Activated CD8-positive, alpha-beta T cell treated with anti-CD3 and anti-CD28 coated beads for 36 hours (primary cell): ENCODE measurements at regions of chr16 and their contacts with region 1.

Region 1: DNA sequence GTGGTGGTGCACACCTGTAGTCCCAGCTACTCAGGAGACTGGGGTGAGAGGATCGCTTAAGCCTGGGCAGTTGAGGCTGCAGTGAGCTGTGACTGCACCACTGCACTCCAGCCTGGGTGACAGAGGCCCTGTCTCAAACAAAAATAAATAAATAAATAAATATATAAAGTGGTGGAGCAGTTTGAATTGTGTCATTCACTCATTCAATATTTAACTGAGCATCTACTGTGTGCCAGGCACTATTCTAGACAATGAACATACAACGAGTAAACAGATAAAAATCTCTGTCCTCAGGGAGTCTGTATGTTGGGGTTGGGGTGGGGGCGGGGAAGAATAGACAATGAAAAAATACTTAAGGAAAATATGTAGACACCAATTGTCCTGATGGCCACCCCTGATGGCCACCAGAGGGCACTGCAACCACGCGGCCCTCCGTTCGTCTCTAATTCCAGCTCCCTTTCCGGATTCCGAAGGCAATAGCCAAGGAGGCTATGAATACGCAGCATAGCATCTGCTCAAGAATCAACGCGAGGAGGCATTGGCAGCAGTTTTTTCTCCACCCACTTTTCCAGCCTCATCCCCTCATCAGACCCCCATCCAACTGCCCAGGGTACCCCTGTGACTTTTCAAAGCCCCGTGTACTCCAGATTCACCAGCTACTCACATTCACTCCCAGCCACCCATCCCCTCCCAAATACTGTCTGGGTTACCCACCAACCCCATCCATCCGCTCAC is 21.4 kb downstream of the QPRT start:
- DNase-seq: peak; percentile 85
- ATAC-seq: peak; percentile 31
- H3K4me3 Mint-ChIP-seq: no peak overlapping the region
- H3K27ac Mint-ChIP-seq: peak overlapping the region; percentile 23
- H3K4me1 Mint-ChIP-seq: peaks cover 29% of the 10 kb centered on the region
- H3K27me3 Mint-ChIP-seq: no peaks in the 10 kb centered on the region
- CTCF ChIP-seq: peak; percentile 93

Region 2: GRCh38 chr16:29686740-29687332 is 13.6 kb before region 1 on chr16:
- CTCF ChIA-PET with region 1: interaction called, 49 read pairs
- POLR2A ChIA-PET with region 1: interaction called, 4 read pairs
- intact Hi-C with region 1: no loop called
- DNase-seq: no peak
- ATAC-seq: no peak
- H3K4me3 Mint-ChIP-seq: no peak overlapping the region
- H3K27ac Mint-ChIP-seq: peak overlapping the region; percentile 42
- H3K4me1 Mint-ChIP-seq: peaks cover 16% of the 10 kb centered on the region
- H3K27me3 Mint-ChIP-seq: no peaks in the 10 kb centered on the region
- CTCF ChIP-seq: no peak

Region 3: DNA sequence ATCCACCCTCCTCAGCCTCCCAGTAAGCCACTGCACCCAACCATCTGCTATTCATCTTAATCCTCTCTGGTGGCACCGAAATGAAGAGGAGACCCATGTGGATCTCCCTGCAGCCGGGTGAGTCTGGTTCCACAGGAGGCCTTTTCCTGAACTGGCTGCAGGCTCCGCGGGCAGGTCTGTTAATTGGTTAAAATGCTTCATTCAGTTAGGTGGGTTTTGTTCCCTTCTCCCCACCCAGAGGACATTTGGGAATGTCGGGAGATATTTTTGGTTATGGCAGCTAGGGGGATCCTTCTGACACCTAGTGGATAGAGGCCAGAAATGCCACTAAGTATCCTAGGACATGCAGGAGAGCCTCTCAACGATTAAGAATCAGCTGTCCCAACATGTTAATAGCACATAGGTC is 28.7 kb after region 1 on chr16:
- CTCF ChIA-PET with region 1: interaction called, 16 read pairs
- POLR2A ChIA-PET with region 1: interaction called, 3 read pairs
- intact Hi-C with region 1: no loop called
- DNase-seq: no peak
- ATAC-seq: no peak
- H3K4me3 Mint-ChIP-seq: no peak overlapping the region
- H3K27ac Mint-ChIP-seq: no peak overlapping the region
- H3K4me1 Mint-ChIP-seq: peaks cover 33% of the 10 kb centered on the region
- H3K27me3 Mint-ChIP-seq: no peaks in the 10 kb centered on the region
- CTCF ChIP-seq: peak; percentile 32

Region 4: DNA sequence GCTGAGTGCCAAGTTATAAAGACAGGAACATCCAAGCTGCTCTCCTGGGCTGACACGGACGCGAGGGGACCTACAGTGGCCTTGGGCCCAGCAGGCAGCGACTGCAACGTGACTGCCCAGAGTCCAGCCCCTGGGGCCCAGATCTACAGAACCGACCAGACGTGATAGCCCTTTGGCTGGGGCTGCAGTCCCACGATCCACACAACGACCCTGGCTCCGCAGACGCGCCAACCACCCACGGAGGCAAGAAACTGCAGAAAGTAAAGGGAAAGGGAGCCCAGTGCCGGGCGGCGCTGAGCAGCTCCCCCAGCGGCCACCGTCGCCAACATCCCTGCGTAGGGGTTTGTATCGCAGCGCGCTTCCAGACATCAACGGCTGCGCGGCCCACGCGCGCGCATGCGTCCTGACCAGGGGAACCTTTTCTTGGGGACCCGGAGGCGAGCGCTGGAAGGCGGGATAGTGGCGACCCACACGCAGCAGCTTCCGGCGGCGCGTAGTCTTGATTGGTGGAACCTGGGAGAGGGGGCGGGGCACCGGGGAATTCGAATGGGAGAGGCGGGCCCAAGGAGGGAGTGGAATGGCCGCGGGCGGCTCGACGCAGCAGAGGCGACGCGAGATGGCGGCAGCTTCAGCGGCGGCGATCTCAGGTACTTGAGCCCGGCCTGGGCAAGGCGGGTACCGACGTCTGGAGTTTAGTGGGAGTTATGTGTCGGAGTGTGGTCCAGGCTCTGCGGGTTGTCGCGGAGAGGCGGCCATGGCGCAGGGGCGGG is 89.9 kb after region 1 on chr16 and contains the start of gene KIF22:
- CTCF ChIA-PET with region 1: interaction called, 43 read pairs
- POLR2A ChIA-PET with region 1: interaction called, 16 read pairs
- intact Hi-C with region 1: loop called (anchors 10 kb)
- DNase-seq: peak; percentile 100
- ATAC-seq: peak; percentile 97
- H3K4me3 Mint-ChIP-seq: peak within 1 kb of the TSS; percentile 100
- H3K27ac Mint-ChIP-seq: peak within 1 kb of the TSS; percentile 97
- H3K4me1 Mint-ChIP-seq: peaks cover 41% of the 10 kb centered on the region
- H3K27me3 Mint-ChIP-seq: no peaks in the 10 kb centered on the region
- CTCF ChIP-seq: peak; percentile 69
- total RNA-seq, gene KIF22: 160 to 165 TPM

Region 5: DNA sequence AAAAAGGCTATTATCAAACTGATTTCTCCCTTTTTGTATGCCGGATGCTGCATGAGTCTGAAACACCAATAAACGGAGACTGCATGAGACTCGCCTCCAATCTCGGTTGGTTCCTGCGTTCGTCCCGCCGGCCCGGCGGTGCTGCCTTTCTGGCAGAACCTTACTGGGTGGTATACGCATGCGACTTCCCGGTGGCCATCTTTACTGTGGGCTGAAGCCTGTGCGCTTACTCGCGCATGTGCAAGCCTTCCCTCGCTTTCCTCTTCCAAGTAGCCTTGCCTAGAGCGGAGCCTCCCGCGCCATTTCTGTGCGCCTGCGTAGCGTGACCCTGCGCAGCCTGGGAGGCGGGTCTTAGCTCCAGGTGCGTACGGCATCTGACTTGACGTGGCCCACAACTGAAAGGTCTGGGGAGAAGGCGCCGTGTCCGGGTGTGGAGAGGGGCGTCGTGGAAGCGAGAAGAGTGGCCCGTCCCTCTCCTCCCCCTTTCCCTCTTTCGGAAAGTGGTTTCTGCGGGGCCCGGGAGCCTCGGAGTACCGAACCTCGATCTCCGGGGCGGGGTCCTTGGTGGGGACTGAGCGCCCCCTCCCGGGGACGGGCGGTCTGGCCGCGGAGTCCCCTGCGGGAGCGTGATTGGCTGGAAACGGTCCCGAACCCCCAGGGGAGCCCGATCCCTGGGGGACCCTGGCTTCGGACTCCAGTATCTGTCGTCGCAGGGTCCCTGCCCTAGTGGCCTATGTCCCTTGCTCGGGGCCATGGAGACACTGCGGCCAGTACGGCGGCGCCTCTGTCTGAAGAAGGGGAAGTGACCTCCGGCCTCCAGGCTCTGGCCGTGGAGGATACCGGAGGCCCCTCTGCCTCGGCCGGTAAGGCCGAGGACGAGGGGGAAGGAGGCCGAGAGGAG is 115.6 kb after region 1 on chr16 and contains the start of gene PAGR1:
- CTCF ChIA-PET with region 1: interaction called, 32 read pairs
- POLR2A ChIA-PET with region 1: interaction called, 5 read pairs
- intact Hi-C with region 1: loop called (anchors 10 kb)
- DNase-seq: peak; percentile 99
- ATAC-seq: peak; percentile 74
- H3K4me3 Mint-ChIP-seq: peak within 1 kb of the TSS; percentile 98
- H3K27ac Mint-ChIP-seq: peak within 1 kb of the TSS; percentile 95
- H3K4me1 Mint-ChIP-seq: peaks cover 69% of the 10 kb centered on the region
- H3K27me3 Mint-ChIP-seq: no peaks in the 10 kb centered on the region
- CTCF ChIP-seq: peak; percentile 94
- total RNA-seq, gene PAGR1: 26.8 to 29.0 TPM

Region 6: DNA sequence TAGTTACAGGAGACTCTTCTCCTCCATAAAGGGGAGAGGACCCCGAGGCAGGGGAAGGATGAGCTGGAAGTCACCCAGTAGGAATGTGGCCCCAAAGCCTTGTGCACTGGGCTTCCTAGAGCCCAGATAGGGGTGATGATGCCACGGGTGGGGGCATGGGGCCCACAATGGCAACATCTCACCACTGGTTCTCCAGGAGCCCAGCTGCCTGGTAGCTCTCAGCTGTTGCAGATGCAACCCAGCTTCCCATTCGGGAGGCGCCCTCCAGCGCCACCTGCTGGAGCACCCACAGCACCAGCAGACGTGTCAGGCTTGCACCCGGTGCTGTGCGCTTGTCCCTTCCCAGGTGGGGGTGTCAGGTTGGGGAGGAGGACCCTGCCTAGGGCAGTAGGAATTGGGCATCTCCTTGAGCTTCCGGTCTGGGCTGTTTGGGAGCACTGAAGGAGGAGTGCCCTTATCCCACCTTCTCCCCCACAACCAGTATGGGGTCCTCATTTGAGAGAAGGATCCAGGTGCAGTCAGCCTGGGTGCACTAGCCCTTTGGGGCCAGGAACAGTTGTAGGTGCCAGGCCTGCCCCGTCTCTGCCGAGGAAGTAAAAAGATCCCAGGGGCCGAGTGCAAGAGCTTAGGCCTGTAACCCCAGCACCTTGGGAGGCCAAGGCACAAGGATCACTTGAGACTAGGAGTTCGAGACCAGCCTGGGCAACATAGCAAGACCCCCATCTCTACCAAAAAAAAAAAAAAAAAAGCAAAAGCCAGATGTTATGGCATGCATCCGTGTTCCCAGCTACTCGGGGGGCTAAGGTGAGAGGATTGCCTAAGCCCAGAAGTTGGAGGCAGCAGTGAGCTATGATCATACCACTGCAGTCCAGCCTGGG is 148.2 kb after region 1 on chr16:
- CTCF ChIA-PET with region 1: interaction called, 51 read pairs
- POLR2A ChIA-PET with region 1: interaction called, 3 read pairs
- intact Hi-C with region 1: no loop called
- DNase-seq: peak; percentile 86
- ATAC-seq: peak; percentile 96
- H3K4me3 Mint-ChIP-seq: no peak overlapping the region
- H3K27ac Mint-ChIP-seq: no peak overlapping the region
- H3K4me1 Mint-ChIP-seq: no peaks in the 10 kb centered on the region
- H3K27me3 Mint-ChIP-seq: no peaks in the 10 kb centered on the region
- CTCF ChIP-seq: peak; percentile 93

Region 7: GRCh38 chr16:30032083-30032819 is 331.8 kb after region 1 on chr16:
- CTCF ChIA-PET with region 1: interaction called, 32 read pairs
- POLR2A ChIA-PET with region 1: no interaction called
- intact Hi-C with region 1: loop called (anchors 10 kb)
- DNase-seq: peak; percentile 79
- ATAC-seq: peak; percentile 57
- H3K4me3 Mint-ChIP-seq: no peak overlapping the region
- H3K27ac Mint-ChIP-seq: no peak overlapping the region
- H3K4me1 Mint-ChIP-seq: peaks cover 2% of the 10 kb centered on the region
- H3K27me3 Mint-ChIP-seq: peaks cover 46% of the 10 kb centered on the region
- CTCF ChIP-seq: peak; percentile 87